Activated T-helper 1 cell treated with anti-CD3 and anti-CD28 coated beads, Interleukin-12 subunit alpha, Interleukin-12 subunit beta, Interleukin-2, Interleukin-4 antibody, amounts not matched to agents 30 ng/mL and 10 ng/mL and 1 ng/mL, durations not matched to agents 14 hours and 24 hours and 36 hours (primary cell): ENCODE measurements at regions of chr18 and their contacts with region 1.

Region 1: DNA sequence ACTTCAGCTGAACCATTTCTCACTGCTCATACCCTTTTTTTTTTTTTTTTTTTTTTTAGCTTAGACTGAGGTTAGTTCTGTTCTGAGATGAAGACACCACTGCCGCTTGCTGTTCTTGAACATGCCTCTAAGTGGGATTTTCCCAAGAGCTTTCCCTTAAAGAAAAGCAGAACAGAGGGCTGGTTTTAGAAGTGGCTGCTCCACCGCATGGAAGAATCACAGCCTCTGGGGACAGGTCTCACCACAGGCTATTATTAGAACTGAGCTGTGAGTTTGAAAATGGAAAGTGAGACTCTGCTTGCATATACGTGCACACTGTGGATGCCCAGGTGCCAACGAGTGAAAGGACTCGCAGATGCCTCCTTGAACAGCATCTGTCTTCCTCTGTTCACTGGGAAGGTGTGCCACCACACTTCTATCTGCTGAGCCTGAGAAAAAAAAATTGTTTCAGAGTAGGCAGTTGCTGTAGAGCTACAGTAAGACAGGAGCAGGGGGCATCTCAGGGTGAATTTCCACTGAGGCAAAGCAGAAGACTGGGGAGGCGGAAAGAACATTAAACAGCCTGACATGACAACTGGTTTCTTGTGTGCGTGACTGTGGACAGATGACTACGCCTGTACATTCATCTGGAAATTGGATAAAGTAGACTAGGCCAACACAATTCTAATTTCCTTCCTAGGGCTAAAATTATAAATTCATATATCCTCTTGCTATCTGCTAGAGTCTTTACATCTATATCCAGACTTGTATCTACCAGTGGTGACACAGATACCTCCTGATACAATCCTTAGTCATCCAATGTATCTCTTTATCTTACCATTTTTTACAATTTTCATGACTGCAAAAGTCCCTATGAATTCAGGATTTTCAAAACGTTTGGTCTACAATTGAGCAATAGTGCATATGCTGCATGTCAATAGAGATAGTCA is 1045.7 kb upstream of the CELF4 start:
- DNase-seq: no peak
- H3K4me3 Mint-ChIP-seq: no peak overlapping the region
- H3K27ac Mint-ChIP-seq: peak overlapping the region; percentile 64
- H3K4me1 Mint-ChIP-seq: peaks cover 5% of the 10 kb centered on the region
- H3K27me3 Mint-ChIP-seq: no peaks in the 10 kb centered on the region

Region 2: GRCh38 chr18:38497266-38497665 is 114.0 kb before region 1 on chr18:
- intact Hi-C with region 1: loop called (anchors 2 kb)
- DNase-seq: no peak
- H3K4me3 Mint-ChIP-seq: no peak overlapping the region
- H3K27ac Mint-ChIP-seq: no peak overlapping the region
- H3K4me1 Mint-ChIP-seq: no peaks in the 10 kb centered on the region
- H3K27me3 Mint-ChIP-seq: peaks cover 3% of the 10 kb centered on the region

Region 3: DNA sequence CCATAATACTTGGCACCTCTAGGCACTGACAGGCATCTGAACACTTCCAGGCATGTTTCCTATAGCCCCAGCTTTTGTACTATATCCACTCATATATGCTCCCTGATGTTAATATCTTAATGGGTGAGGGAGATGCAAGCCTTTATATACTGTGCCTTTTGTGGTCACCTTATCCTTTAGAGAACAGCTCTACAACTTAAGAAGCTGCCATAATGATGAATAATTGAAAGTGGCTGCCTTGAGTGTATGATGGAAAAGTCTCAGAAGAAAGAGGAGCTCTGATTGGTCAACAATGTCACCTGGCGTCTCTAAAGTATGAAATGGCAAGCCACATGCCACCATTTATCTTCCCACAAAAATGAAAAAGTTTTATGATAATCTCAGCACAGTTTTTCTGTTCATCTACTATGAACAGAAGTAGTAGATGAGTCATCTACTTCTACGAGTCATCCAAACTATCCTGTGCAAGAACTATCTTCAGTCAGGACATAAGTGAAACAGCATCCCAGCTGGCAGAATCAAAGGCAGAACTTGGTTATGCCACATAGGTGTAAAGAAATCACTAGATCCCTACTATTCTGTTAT is 47.8 kb before region 1 on chr18:
- intact Hi-C with region 1: loop called (anchors 2 kb)
- DNase-seq: no peak
- H3K4me3 Mint-ChIP-seq: no peak overlapping the region
- H3K27ac Mint-ChIP-seq: no peak overlapping the region
- H3K4me1 Mint-ChIP-seq: peaks cover 10% of the 10 kb centered on the region
- H3K27me3 Mint-ChIP-seq: peaks cover 2% of the 10 kb centered on the region

Region 4: GRCh38 chr18:38575648-38576047 is 35.7 kb before region 1 on chr18:
- intact Hi-C with region 1: loop called (anchors 5 kb)
- DNase-seq: peak; percentile 1
- H3K4me3 Mint-ChIP-seq: no peak overlapping the region
- H3K27ac Mint-ChIP-seq: peak overlapping the region; percentile 14
- H3K4me1 Mint-ChIP-seq: peaks cover 18% of the 10 kb centered on the region
- H3K27me3 Mint-ChIP-seq: no peaks in the 10 kb centered on the region

Region 5: GRCh38 chr18:38718365-38718901 is 107.1 kb after region 1 on chr18:
- intact Hi-C with region 1: no loop called
- DNase-seq: no peak
- H3K4me3 Mint-ChIP-seq: no peak overlapping the region
- H3K27ac Mint-ChIP-seq: no peak overlapping the region
- H3K4me1 Mint-ChIP-seq: no peaks in the 10 kb centered on the region
- H3K27me3 Mint-ChIP-seq: no peaks in the 10 kb centered on the region

Region 6: DNA sequence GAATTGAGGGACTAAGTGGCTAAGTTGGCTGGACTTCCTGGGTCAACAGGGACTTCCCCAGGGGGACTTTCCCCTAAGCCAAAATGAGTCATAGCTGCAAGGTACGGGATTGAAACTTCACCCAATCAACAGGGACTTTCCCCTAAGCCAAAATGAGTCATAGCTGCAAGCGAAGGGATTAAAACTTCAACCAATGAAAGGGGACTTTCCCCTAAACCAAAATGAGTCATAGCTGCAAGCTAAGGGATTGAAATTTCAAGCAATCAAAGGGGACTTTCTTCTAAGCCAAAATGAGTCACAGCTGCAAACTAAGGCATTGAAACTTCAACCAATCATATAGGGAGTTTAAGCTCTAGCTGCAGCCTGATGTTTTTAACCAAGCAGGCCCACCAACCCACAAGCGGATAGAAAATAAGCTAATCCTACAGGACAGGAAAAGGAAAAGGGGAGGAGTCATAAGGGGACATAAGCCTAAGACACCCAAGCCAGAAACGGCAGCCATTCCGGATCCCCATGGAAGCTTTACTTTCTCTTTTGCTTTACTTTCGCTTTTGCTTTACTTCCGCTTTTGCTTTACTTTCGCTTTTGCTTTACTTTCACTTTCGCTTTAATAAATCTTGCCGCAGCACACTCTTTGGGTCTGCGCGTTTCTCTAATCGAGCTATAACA is 329.7 kb after region 1 on chr18:
- intact Hi-C with region 1: loop called (anchors 1 kb)
- DNase-seq: peak; percentile 69
- H3K4me3 Mint-ChIP-seq: peak overlapping the region; percentile 72
- H3K27ac Mint-ChIP-seq: peak overlapping the region; percentile 91
- H3K4me1 Mint-ChIP-seq: peaks cover 28% of the 10 kb centered on the region
- H3K27me3 Mint-ChIP-seq: peaks cover 9% of the 10 kb centered on the region